ENCODE measurements at regions of chr5 and their contacts with region 1.

Region 1: DNA sequence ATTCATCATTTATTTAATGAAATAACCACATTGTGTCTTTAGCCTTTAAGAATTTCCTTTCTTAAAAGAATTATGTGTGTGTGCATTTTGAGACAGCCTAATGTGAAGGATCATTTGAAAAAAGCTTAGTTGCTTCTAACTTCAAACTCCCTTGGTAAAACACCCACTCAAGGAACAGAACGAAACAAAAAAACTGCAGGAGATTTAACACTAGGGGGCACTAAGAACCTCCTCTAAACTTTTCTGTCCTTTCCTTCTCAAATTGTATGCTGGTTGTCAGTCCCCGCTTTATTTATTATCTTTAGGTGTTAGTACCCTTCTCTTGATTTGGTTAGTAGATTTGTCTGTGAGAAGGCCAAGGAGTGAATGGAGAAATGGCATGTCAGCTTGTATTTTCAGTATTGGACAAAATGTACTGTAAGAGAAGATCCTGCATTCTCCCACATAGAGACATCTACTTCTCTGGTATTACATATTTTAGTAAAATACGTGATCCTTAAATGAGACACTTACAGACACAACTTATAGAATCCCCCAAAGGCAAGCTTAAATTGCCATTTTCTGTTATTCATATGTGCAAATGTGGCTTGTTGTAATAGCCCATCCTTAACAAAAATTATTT is 229.7 kb downstream of the MRPS30 start:
- DNase-seq: no peak
- ATAC-seq: peak in 1 of 8 donors; percentile 51
- H3K4me3 ChIP-seq: no peak overlapping the region
- H3K27ac ChIP-seq: no peak overlapping the region
- H3K4me1 ChIP-seq: no peaks in the 10 kb centered on the region
- H3K27me3 ChIP-seq: no peaks in the 10 kb centered on the region
- CTCF ChIP-seq: peak; percentile 32 to 77 (median 67)

Region 2: GRCh38 chr5:44952376-44952775 is 86.1 kb before region 1 on chr5:
- intact Hi-C with region 1: no loop called
- DNase-seq: no peak
- ATAC-seq: no peak
- H3K4me3 ChIP-seq: no peak overlapping the region
- H3K27ac ChIP-seq: no peak overlapping the region
- H3K4me1 ChIP-seq: no peaks in the 10 kb centered on the region
- H3K27me3 ChIP-seq: no peaks in the 10 kb centered on the region
- CTCF ChIP-seq: peak; percentile 24 to 66 (median 51)

Region 3: GRCh38 chr5:44974813-44975212 is 63.7 kb before region 1 on chr5:
- intact Hi-C with region 1: no loop called
- DNase-seq: no peak
- ATAC-seq: no peak
- H3K4me3 ChIP-seq: no peak overlapping the region
- H3K27ac ChIP-seq: no peak overlapping the region
- H3K4me1 ChIP-seq: no peaks in the 10 kb centered on the region
- H3K27me3 ChIP-seq: no peaks in the 10 kb centered on the region
- CTCF ChIP-seq: no peak

Region 4: GRCh38 chr5:45512521-45512920 is 474.0 kb after region 1 on chr5:
- intact Hi-C with region 1: loop called in 3 of 10 experiments (anchors 5 kb)
- DNase-seq: no peak
- ATAC-seq: no peak
- H3K4me3 ChIP-seq: no peak overlapping the region
- H3K27ac ChIP-seq: no peak overlapping the region
- H3K4me1 ChIP-seq: no peaks in the 10 kb centered on the region
- H3K27me3 ChIP-seq: no peaks in the 10 kb centered on the region
- CTCF ChIP-seq: no peak

Region 5: GRCh38 chr5:45521067-45521466 is 482.6 kb after region 1 on chr5:
- intact Hi-C with region 1: loop called in 8 of 10 experiments (anchors 1 to 10 kb)
- DNase-seq: peak in 1 of 2 donors; percentile 34
- ATAC-seq: peak in 6 of 8 donors; percentile 38 to 73 (median 50)
- H3K4me3 ChIP-seq: no peak overlapping the region
- H3K27ac ChIP-seq: no peak overlapping the region
- H3K4me1 ChIP-seq: no peaks in the 10 kb centered on the region
- H3K27me3 ChIP-seq: no peaks in the 10 kb centered on the region
- CTCF ChIP-seq: peak in 8 of 9 donors; percentile 9 to 65 (median 52)

Region 6: GRCh38 chr5:45639038-45639437 is 600.6 kb after region 1 on chr5:
- intact Hi-C with region 1: loop called in 1 of 10 experiments (anchors 10 kb)
- DNase-seq: no peak
- ATAC-seq: no peak
- H3K4me3 ChIP-seq: no peak overlapping the region
- H3K27ac ChIP-seq: no peak overlapping the region
- H3K4me1 ChIP-seq: no peaks in the 10 kb centered on the region
- H3K27me3 ChIP-seq: no peaks in the 10 kb centered on the region
- CTCF ChIP-seq: peak in 6 of 9 donors; percentile 16 to 40 (median 34)

Region 7: GRCh38 chr5:45696206-45696836 is 657.8 kb after region 1 on chr5 and contains the start of gene HCN1:
- intact Hi-C with region 1: loop called in 5 of 10 experiments (anchors 2 to 5 kb)
- DNase-seq: peak; percentile 59 to 80
- ATAC-seq: peak; percentile 93 to 100 (median 98)
- H3K4me3 ChIP-seq: peak within 1 kb of the TSS in 9 of 10 donors; percentile 10 to 27 (median 20)
- H3K27ac ChIP-seq: no peak within 1 kb of the TSS
- H3K4me1 ChIP-seq: peaks cover 5 to 13% (median 10%) of the 10 kb centered on the region in 9 donors
- H3K27me3 ChIP-seq: peaks cover 6 to 80% (median 44%) of the 10 kb centered on the region in 7 donors
- CTCF ChIP-seq: peak; percentile 40 to 80 (median 72)
- total RNA-seq, gene HCN1: 0.05 to 0.12 (median 0.07) TPM in 7 of 10 donors, not detected in the others